ENCODE measurements at regions of chr1 and their contacts with region 1.

Region 1: DNA sequence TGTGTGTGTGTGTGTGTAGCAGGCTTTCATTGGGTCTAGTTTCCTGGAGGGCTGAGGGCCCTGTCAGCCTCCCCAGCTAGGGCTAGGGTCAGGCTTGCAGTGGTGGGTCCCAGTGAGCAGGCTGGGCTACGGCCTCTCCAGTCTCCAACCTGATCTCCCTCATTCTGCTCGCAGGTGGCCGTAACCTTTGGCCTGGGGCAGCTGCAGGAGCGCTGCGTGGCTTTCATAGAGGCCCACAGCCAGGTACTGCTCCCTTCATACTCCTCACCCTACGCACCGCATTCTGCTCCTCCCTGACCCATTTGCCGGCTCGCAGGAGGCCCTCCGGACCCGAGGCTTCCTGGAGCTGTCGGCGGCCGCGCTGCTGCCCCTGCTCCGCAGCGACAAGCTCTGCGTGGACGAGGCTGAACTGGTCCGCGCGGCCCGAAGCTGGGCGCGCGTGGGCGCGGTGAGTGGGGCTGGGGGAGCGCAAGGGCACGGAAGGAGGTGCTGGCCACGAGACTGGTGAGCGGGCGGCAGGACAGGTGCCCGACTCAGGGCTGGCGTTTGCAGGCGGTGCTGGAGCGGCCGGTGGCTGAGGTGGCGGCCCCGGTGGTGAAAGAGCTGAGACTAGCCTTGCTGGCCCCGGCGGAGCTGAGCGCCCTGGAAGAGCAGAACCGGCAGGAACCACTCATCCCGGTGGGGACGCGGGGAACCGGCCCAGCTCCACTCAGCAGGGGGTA is 4.7 kb downstream of the BTBD19 start:
- DNase-seq: peak; percentile 53
- ATAC-seq: peak; percentile 31
- H3K4me3 Mint-ChIP-seq: peak overlapping the region; percentile 79
- H3K27ac Mint-ChIP-seq: no peak overlapping the region
- H3K4me1 Mint-ChIP-seq: peaks cover 29% of the 10 kb centered on the region
- H3K27me3 Mint-ChIP-seq: peaks cover 7% of the 10 kb centered on the region
- CTCF ChIP-seq: no peak

Region 2: DNA sequence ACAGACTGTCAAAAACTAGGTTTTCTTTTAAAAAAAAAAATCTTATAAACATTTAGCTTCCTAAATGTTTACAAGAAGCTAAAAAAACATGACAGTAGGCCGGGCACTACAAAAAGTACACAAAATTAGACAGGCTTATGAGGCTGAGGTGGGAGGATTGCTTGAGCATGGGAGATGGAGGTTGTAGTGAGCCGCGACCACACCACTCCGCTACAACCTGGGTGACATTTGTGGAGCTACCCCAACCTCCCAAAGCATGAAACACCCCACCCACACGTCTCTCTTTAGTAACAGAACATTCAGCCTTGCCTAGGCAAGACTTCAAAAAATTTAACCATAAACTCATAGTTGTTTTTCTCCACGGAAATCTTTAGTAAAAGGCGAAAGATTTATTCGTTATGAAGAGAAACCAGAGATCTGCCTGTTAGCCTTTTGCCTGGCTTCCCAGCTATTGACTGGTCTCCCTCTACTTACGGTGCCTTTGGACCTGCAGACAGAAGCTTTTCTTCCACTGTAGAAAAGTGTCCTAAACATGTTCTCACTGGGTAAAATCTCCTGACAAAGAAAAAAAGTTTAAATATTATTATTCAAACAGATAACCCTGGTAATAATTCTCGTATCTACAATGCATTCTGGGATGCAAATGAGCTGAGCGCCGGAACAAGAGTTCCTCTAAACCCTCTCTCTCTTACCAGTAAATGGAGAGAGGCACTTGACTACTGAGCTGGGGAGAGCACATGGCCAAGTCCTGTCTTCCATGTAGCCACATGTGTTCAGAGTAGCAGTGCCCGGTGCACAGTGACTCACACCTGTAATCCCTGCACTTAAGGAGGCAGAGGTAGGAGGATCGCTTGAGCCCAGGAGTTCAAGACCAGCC is 91.3 kb before region 1 on chr1:
- CTCF ChIA-PET with region 1: no interaction called
- POLR2A ChIA-PET with region 1: interaction called, 20 read pairs
- DNase-seq: no peak
- ATAC-seq: peak; percentile 90
- H3K4me3 Mint-ChIP-seq: no peak overlapping the region
- H3K27ac Mint-ChIP-seq: peak overlapping the region; percentile 94
- H3K4me1 Mint-ChIP-seq: peaks cover 6% of the 10 kb centered on the region; the same call in 1 of the 2 replicates
- H3K27me3 Mint-ChIP-seq: peaks cover 3% of the 10 kb centered on the region
- CTCF ChIP-seq: no peak

Region 3: DNA sequence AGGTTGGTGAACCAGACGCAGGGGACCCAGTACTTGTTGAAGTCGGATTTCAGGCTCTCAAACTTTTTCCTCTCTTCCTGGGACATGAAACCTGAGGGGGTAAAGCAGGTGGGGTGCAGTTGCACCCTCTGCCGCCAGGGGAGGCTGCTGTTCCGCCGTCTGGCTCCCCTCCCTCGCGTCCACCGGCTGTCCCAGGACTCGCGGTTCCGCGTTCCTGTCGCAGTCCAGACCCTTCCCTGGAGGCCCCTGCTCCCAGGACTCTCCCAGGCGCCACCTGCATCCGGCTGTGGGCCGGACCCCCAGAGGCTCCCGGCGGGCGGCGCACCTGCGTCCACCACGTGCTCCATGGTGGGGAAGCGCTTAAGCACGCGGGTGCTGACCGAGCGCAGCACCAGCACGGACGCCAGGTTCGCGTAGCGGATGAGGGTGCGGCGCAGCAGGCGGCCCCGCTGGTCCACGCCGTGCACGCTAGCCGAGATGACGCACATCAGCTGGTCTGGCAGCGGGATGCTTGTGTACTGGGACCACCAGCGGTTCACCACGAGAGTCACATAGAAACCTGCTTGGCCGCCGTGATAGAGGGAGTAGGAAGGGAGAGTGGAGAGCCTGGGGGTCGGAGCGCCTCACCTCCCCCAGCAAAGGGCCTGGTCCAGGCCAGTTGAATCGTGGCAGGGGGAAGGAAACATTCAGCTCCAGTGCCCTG is 26.7 kb before region 1 on chr1:
- CTCF ChIA-PET with region 1: interaction called, 20 read pairs
- POLR2A ChIA-PET with region 1: interaction called, 5 read pairs
- DNase-seq: peak; percentile 88
- ATAC-seq: peak; percentile 50
- H3K4me3 Mint-ChIP-seq: peak overlapping the region; percentile 70
- H3K27ac Mint-ChIP-seq: no peak overlapping the region; the same call in 1 of the 2 replicates
- H3K4me1 Mint-ChIP-seq: peaks cover 35% of the 10 kb centered on the region
- H3K27me3 Mint-ChIP-seq: peaks cover 12% of the 10 kb centered on the region
- CTCF ChIP-seq: peak; percentile 100

Region 4: GRCh38 chr1:44799770-44800584 is 13.0 kb before region 1 on chr1 and contains the start of gene PLK3:
- CTCF ChIA-PET with region 1: interaction called, 44 read pairs
- POLR2A ChIA-PET with region 1: interaction called, 43 read pairs
- DNase-seq: peak; percentile 98
- ATAC-seq: peak; percentile 90
- H3K4me3 Mint-ChIP-seq: peak within 1 kb of the TSS; percentile 87
- H3K27ac Mint-ChIP-seq: peak within 1 kb of the TSS; percentile 99
- H3K4me1 Mint-ChIP-seq: peaks cover 18% of the 10 kb centered on the region
- H3K27me3 Mint-ChIP-seq: peaks cover 3% of the 10 kb centered on the region; the same call in 1 of the 2 replicates
- CTCF ChIP-seq: peak; percentile 66
- total RNA-seq, gene PLK3: 10.1 to 16.4 TPM (median 12.0 TPM) in 3 replicates

Region 5: GRCh38 chr1:45326627-45327623 is 513.9 kb after region 1 on chr1 and contains the start of gene HPDL:
- CTCF ChIA-PET with region 1: no interaction called
- POLR2A ChIA-PET with region 1: interaction called, 11 read pairs
- DNase-seq: peak; percentile 86
- ATAC-seq: peak; percentile 83
- H3K4me3 Mint-ChIP-seq: peak within 1 kb of the TSS; percentile 70
- H3K27ac Mint-ChIP-seq: peak within 1 kb of the TSS; percentile 79
- H3K4me1 Mint-ChIP-seq: peaks cover 46% of the 10 kb centered on the region
- H3K27me3 Mint-ChIP-seq: no peaks in the 10 kb centered on the region; the same call in 1 of the 2 replicates
- CTCF ChIP-seq: no peak
- total RNA-seq, gene HPDL: 24.9 to 44.0 TPM (median 27.8 TPM) in 3 replicates